Sigmoid colon (tissue), 7 donors: ENCODE measurements at regions of chr11 and their contacts with region 1.

Region 1: GRCh38 chr11:78139422-78140391 is at the start of gene ALG8:
- DNase-seq: peak; percentile 97
- H3K4me3 ChIP-seq: peak within 1 kb of the TSS; percentile 65 to 70 (median 69)
- H3K27ac ChIP-seq: peak within 1 kb of the TSS; percentile 68 to 82 (median 76)
- H3K4me1 ChIP-seq: peaks cover 0 to 18% (median 16%) of the 10 kb centered on the region in 4 donors
- H3K27me3 ChIP-seq: no peaks in the 10 kb centered on the region
- CTCF ChIP-seq: no peak
- EP300 ChIP-seq: no peak
- POLR2A ChIP-seq: peak in 1 of 2 donors; percentile 8
- total RNA-seq, gene ALG8: 15.6 to 26.4 (median 24.2) TPM

Region 2: GRCh38 chr11:78079232-78080083 is 60.2 kb before region 1 on chr11 and contains the start of gene NDUFC2:
- intact Hi-C with region 1: loop called (anchors 5 kb)
- DNase-seq: peak; percentile 88
- H3K4me3 ChIP-seq: peak within 1 kb of the TSS; percentile 80 to 97 (median 88)
- H3K27ac ChIP-seq: peak within 1 kb of the TSS; percentile 81 to 91 (median 88)
- H3K4me1 ChIP-seq: peaks cover 0 to 44% (median 38%) of the 10 kb centered on the region in 4 donors
- H3K27me3 ChIP-seq: no peaks in the 10 kb centered on the region
- CTCF ChIP-seq: no peak
- EP300 ChIP-seq: no peak
- POLR2A ChIP-seq: peak; percentile 44 to 61
- total RNA-seq, gene NDUFC2: 55.9 to 109 (median 93.8) TPM

Region 3: GRCh38 chr11:78188286-78189173 is 48.8 kb after region 1 on chr11 and contains the starts of genes KCTD21 and USP35:
- intact Hi-C with region 1: loop called (anchors 2 kb)
- DNase-seq: peak; percentile 98
- H3K4me3 ChIP-seq: peak within 1 kb of the TSS; percentile 70 to 97 (median 90)
- H3K27ac ChIP-seq: peak within 1 kb of the TSS; percentile 79 to 91 (median 88)
- H3K4me1 ChIP-seq: peaks cover 0 to 51% (median 39%) of the 10 kb centered on the region in 4 donors
- H3K27me3 ChIP-seq: no peaks in the 10 kb centered on the region
- CTCF ChIP-seq: no peak
- EP300 ChIP-seq: no peak
- POLR2A ChIP-seq: peak; percentile 38 to 70
- total RNA-seq, gene KCTD21: 5.4 to 18.8 (median 9.2) TPM
- total RNA-seq, gene USP35: 6.7 to 23.3 (median 10.6) TPM

Region 4: GRCh38 chr11:78228467-78228866 is 88.8 kb after region 1 on chr11:
- intact Hi-C with region 1: no loop called
- DNase-seq: no peak
- H3K4me3 ChIP-seq: no peak overlapping the region
- H3K27ac ChIP-seq: no peak overlapping the region
- H3K4me1 ChIP-seq: peaks cover 0 to 12% (median 3%) of the 10 kb centered on the region in 4 donors
- H3K27me3 ChIP-seq: no peaks in the 10 kb centered on the region
- CTCF ChIP-seq: peak in 3 of 4 experiments; percentile 30 to 45 (median 43)
- EP300 ChIP-seq: no peak
- POLR2A ChIP-seq: no peak

Region 5: DNA sequence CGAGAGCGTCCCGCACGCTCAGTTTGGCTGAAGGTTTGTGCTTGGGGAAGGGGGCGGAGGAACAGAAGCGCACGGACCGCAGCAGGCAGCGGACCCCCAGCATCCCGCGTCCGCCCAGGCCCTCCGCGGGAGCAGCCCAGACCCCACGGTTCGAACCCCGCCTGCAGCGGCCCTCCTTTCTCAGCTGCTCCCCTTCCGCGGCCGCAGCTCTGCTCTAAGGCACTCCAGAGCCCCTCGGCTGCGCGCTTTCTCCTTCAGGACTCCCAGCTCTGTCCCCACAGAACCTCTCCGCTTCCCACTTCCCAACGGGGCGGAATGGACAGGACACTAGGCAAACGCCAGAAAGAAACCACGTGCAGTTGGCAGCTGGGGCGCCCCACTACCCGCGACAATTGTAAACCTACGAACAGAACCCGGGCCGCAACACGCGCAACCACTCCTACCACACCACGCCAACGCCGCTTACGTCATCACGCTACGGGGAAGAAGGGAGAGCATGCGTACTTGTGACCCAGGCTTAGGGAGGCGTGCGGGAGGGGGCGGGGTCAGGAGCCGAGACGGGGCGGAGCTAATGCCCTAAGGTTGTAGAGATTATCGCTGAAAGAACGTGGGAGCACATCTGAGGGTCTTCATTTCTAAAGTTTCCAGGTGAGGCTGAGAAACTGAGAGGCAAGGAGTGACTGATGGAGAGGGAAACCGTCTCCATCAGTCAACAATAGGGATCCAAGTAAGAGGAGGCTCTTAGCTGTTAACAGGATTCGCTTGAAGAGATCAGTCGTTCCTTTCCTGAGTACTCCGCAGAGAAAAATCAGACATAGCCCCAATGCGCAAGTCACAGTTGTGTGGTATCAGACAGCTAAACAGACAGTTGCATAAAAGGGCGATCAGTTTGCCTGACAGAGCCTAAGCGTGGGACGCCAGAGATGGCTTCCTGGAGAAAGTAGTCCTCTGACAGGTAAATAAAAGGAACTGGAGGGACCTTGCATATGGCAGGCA is 435.0 kb after region 1 on chr11 and contains the start of gene NARS2:
- intact Hi-C with region 1: loop called (anchors 2 kb)
- DNase-seq: peak; percentile 99
- H3K4me3 ChIP-seq: peak within 1 kb of the TSS; percentile 62 to 91 (median 82)
- H3K27ac ChIP-seq: peak within 1 kb of the TSS; percentile 85 to 91 (median 89)
- H3K4me1 ChIP-seq: peaks cover 0 to 20% (median 15%) of the 10 kb centered on the region in 4 donors
- H3K27me3 ChIP-seq: no peaks in the 10 kb centered on the region
- CTCF ChIP-seq: no peak
- EP300 ChIP-seq: no peak
- POLR2A ChIP-seq: peak; percentile 56 to 78
- total RNA-seq, gene NARS2: 7.8 to 15.5 (median 13.6) TPM